WTC11 (cell line): ENCODE measurements at regions of chr1 and their contacts with region 1.

Region 1: GRCh38 chr1:85259118-85259911 is at the start of gene C1orf52:
- DNase-seq: peak; percentile 99
- ATAC-seq: peak; percentile 96
- H3K4me3 Mint-ChIP-seq: peak within 1 kb of the TSS; percentile 95
- H3K27ac Mint-ChIP-seq: peak within 1 kb of the TSS; percentile 84
- H3K4me1 Mint-ChIP-seq: peaks cover 23% of the 10 kb centered on the region
- H3K27me3 Mint-ChIP-seq: peaks cover 7% of the 10 kb centered on the region
- CTCF ChIP-seq: peak; percentile 99
- total RNA-seq, gene C1orf52: 35.8 to 44.5 TPM (median 40.2 TPM) in 3 replicates

Region 2: DNA sequence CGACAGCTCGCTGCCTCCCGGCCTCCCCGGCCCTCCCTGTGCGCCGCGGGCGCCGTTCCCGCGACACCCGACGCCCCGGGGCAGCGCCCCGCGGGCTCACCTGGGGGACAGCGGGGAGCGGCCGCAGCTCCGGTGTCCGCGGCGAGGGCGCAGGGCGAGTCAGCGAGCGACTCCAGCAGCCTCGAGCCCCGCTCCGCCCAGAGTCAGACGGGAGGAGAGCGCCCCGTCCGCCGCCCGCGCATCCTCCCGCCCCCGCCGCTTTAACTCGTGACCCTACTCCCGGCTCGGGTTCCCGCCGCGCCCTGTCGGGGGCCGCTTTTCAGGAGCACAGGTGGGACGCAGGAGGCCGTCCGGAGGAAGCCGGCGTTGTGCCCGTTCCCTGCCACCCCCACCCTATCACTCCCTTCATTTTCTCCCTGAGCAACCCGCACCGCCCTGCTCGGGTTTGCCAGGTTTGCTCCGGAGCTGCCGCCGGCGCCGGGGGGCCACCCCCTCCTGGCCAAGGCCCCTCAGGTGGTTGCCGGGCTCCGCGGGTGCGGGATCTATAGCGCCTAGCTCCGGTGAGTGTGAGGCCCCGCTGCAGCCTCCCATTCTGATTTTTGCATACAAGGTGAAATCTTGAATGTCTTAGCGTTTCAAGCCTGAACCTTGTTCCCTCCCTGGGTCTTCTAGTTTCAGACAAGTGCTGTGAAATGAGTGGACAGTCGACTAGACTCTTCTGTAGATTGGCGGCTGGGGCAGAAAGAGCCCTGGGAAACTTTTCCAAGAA is 210.8 kb before region 1 on chr1 and contains the start of gene MCOLN3:
- CTCF ChIA-PET with region 1: interaction called, 14 read pairs
- POLR2A ChIA-PET with region 1: no interaction called
- DNase-seq: peak; percentile 68
- ATAC-seq: peak; percentile 62
- H3K4me3 Mint-ChIP-seq: peak within 1 kb of the TSS; percentile 84
- H3K27ac Mint-ChIP-seq: no peak within 1 kb of the TSS
- H3K4me1 Mint-ChIP-seq: peaks cover 27% of the 10 kb centered on the region
- H3K27me3 Mint-ChIP-seq: peaks cover 57% of the 10 kb centered on the region
- CTCF ChIP-seq: no peak
- total RNA-seq, gene MCOLN3: 3.5 to 6.4 TPM (median 3.8 TPM) in 3 replicates

Region 3: DNA sequence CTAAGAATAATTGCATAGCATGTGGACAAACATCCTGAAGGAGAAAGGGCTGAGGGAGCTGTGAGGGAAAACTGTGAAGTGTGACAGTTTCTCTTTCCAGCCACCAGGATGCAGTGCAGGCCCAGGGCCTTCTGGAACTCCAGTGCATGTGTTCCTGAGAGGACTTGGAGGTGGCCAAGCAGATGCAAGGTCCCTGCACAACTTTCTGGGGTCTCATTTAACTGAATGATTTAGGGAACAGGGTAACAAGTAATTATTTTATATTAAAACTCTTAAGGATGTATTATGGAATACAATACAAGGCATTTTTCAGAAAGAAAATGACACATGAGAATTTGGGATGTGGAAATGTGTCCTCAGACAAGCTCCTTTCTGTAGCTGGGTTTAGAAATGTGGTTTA is 149.8 kb before region 1 on chr1:
- CTCF ChIA-PET with region 1: interaction called, 47 read pairs
- POLR2A ChIA-PET with region 1: no interaction called
- DNase-seq: peak; percentile 64
- ATAC-seq: peak; percentile 100
- H3K4me3 Mint-ChIP-seq: no peak overlapping the region
- H3K27ac Mint-ChIP-seq: no peak overlapping the region
- H3K4me1 Mint-ChIP-seq: no peaks in the 10 kb centered on the region
- H3K27me3 Mint-ChIP-seq: peaks cover 3% of the 10 kb centered on the region; the same call in 1 of the 2 replicates
- CTCF ChIP-seq: peak; percentile 59

Region 4: DNA sequence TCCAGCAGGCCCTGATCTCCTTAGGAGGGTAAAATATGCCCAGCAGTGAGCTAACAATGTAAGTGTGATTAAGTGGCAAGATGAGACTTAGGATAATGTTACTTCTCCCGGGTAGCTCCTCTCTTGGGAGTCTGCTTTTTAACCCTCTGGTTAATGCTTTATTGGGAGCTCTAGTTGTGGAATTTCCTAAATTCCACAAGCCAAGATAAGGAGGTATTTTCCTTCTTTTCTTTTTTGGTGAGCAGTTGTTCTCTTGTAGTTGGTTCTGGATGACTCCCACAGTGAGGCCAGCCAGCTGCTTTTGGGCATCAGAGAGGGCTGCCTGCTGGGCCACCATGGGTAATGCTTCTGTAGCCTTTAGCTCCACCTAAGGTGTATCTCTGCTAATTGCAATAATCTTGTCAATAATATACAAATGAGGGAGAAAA is 19.1 kb before region 1 on chr1:
- CTCF ChIA-PET with region 1: interaction called, 13 read pairs
- POLR2A ChIA-PET with region 1: interaction called, 3 read pairs
- DNase-seq: peak; percentile 56
- ATAC-seq: peak; percentile 94
- H3K4me3 Mint-ChIP-seq: no peak overlapping the region
- H3K27ac Mint-ChIP-seq: no peak overlapping the region
- H3K4me1 Mint-ChIP-seq: peaks cover 25% of the 10 kb centered on the region
- H3K27me3 Mint-ChIP-seq: no peaks in the 10 kb centered on the region
- CTCF ChIP-seq: no peak

Region 5: DNA sequence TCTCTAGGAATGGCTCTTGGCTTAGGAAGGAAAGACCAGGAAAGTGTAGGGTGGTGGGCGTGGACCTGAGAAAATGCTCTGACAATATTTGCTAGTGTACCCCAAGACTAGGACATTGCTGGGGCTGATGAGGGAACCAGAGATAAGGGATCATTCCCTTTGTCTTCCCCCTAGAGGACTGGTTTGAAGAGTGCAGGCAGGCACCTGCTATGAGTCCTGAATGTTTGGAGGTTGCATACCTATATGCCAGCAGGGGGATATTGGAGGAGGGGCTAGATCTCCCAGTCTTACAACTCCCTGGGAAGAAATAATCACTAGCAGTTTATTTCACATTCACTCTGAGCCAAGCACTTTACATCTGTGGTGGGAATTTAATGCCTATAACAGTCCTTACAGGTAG is 23.1 kb after region 1 on chr1:
- CTCF ChIA-PET with region 1: interaction called, 83 read pairs
- POLR2A ChIA-PET with region 1: no interaction called
- DNase-seq: peak; percentile 38
- ATAC-seq: peak; percentile 97
- H3K4me3 Mint-ChIP-seq: no peak overlapping the region
- H3K27ac Mint-ChIP-seq: no peak overlapping the region
- H3K4me1 Mint-ChIP-seq: peaks cover 28% of the 10 kb centered on the region
- H3K27me3 Mint-ChIP-seq: no peaks in the 10 kb centered on the region
- CTCF ChIP-seq: peak; percentile 19; the same call in 1 of the 2 replicates